A549 (cell line): ENCODE measurements at regions of chr3 and their contacts with region 1.

Region 1: GRCh38 chr3:48465531-48466378 is 19.2 kb downstream of the ATRIP start:
- DNase-seq: peak; percentile 97 to 98
- ATAC-seq: peak; percentile 90 to 93
- H3K4me3 ChIP-seq: peak overlapping the region; percentile 37
- H3K27ac ChIP-seq: peak overlapping the region; percentile 96 to 99
- H3K4me1 ChIP-seq: peaks cover 52% of the 10 kb centered on the region
- CTCF ChIP-seq: peak; percentile 60
- EP300 ChIP-seq: no peak
- POLR2A ChIP-seq: peak; percentile 58
- RAD21 ChIP-seq: peak; percentile 75

Region 2: DNA sequence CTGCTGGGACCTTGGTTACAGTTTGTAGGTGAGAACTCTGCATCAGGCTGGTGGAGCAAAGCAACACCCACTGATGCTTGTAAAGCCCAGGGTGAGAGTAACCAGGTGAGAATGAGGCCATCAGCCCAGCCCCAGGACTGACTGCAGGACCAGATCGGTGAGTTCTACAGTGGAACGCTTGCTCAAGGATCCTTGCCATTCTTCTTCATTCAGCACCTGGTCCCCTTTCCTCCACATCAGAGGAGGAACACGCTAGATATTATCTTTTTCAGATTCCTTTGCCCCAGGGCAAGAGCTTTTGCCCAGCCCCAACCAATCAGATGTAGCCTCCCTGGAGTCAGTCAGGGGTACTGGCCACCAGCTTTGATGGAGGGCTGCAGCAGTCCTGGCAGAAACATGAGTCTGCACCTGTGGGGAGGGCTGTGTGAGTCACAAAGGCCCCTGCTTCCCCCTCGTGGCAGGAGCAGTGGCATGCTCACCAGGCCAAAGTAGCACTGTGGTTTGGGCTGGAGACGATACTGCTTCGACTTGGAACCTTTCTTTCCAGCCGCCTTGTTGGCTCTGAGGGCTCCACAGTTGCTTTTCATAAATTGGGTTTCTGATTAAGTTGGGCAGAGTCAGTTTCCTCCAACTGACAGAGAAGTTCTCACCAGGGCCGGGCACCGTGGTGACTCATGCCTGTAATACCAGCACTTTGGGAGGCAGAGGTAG is 41.8 kb after region 1 on chr3:
- CTCF ChIA-PET with region 1: interaction called, 10 read pairs
- POLR2A ChIA-PET with region 1: no interaction called
- DNase-seq: peak; percentile 76 to 79
- ATAC-seq: peak; percentile 74 to 85
- H3K4me3 ChIP-seq: no peak overlapping the region
- H3K27ac ChIP-seq: peak overlapping the region; percentile 57 to 71; a peak in 5 of 6 replicates
- H3K4me1 ChIP-seq: peaks cover 32% of the 10 kb centered on the region
- CTCF ChIP-seq: peak; percentile 44
- EP300 ChIP-seq: no peak
- POLR2A ChIP-seq: no peak
- RAD21 ChIP-seq: peak; percentile 72 to 75